B cell (primary cell): ENCODE measurements at regions of chr22 and their contacts with region 1.

Region 1: GRCh38 chr22:24984122-24984521 is 31.6 kb downstream of the KIAA1671 start:
- DNase-seq: no peak
- ATAC-seq: no peak
- H3K4me3 ChIP-seq: no peak overlapping the region
- H3K4me3 Mint-ChIP-seq: no peak overlapping the region
- H3K27ac ChIP-seq: no peak overlapping the region
- H3K27ac Mint-ChIP-seq: no peak overlapping the region
- H3K4me1 ChIP-seq: no peaks in the 10 kb centered on the region
- H3K4me1 Mint-ChIP-seq: no peaks in the 10 kb centered on the region
- H3K27me3 ChIP-seq: peaks cover 0 to 9% (median 1%) of the 10 kb centered on the region in 4 experiments
- H3K27me3 Mint-ChIP-seq: peaks cover 25% of the 10 kb centered on the region
- CTCF ChIP-seq: no peak

Region 2: GRCh38 chr22:24961217-24961844 is 22.8 kb before region 1 on chr22:
- CTCF ChIA-PET with region 1: interaction called, 6 read pairs
- POLR2A ChIA-PET with region 1: interaction called, 11 read pairs
- intact Hi-C with region 1: no loop called
- DNase-seq: no peak
- ATAC-seq: no peak
- H3K4me3 ChIP-seq: no peak overlapping the region
- H3K4me3 Mint-ChIP-seq: no peak overlapping the region
- H3K27ac ChIP-seq: no peak overlapping the region
- H3K27ac Mint-ChIP-seq: no peak overlapping the region
- H3K4me1 ChIP-seq: no peaks in the 10 kb centered on the region
- H3K4me1 Mint-ChIP-seq: no peaks in the 10 kb centered on the region
- H3K27me3 ChIP-seq: peaks cover 0 to 6% (median 0%) of the 10 kb centered on the region in 4 experiments
- H3K27me3 Mint-ChIP-seq: peaks cover 10% of the 10 kb centered on the region
- CTCF ChIP-seq: no peak

Region 3: GRCh38 chr22:25100948-25101347 is 116.8 kb after region 1 on chr22:
- CTCF ChIA-PET with region 1: no interaction called
- POLR2A ChIA-PET with region 1: no interaction called
- intact Hi-C with region 1: no loop called
- DNase-seq: no peak
- ATAC-seq: no peak
- H3K4me3 ChIP-seq: no peak overlapping the region
- H3K4me3 Mint-ChIP-seq: no peak overlapping the region
- H3K27ac ChIP-seq: no peak overlapping the region
- H3K27ac Mint-ChIP-seq: no peak overlapping the region
- H3K4me1 ChIP-seq: no peaks in the 10 kb centered on the region
- H3K4me1 Mint-ChIP-seq: no peaks in the 10 kb centered on the region
- H3K27me3 ChIP-seq: peaks cover 0 to 2% (median 0%) of the 10 kb centered on the region in 4 experiments
- H3K27me3 Mint-ChIP-seq: peaks cover 20% of the 10 kb centered on the region
- CTCF ChIP-seq: no peak